Caco-2 (cell line): ENCODE measurements at regions of chr19 and their contacts with region 1.

Region 1: DNA sequence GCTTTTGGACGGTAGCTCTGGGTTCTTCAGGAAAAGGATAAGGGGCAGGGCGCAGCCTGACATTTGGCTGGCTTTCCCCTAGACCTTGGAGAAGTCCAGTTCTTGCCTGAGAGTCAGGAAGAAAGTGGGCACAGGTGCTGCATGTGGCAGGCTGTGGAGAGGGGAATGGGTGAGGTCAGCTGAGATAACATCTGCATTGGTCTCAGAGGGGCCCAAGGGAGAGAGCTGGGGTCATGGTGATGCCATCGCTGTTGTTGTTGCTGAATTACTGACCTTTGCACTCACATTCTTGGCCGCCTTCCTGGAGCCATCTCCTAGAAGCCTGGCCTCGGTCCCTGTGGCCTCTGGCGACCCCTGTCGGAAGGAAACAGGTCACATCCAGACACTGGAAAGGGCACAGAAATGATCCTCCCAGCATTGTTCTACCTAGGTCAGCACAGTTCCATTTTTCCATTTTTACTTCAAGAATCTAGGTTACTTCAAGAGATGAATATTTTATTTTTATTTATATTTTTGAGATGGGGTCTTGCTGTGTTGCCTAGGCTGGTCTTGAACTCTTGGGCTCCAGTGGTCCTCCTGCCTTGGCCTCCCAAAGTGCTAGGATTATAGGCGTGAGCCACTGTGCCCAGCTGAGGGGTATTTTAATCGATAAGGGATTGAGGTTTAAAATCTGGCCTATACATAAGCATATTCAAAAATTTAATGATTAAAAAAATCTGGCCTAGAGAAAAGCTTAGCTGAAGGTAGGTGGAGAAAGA is 6.5 kb upstream of the LIPE start:
- DNase-seq: peak; percentile 92 to 94
- H3K4me3 ChIP-seq: no peak overlapping the region
- H3K4me3 Mint-ChIP-seq: peak overlapping the region; percentile 51
- H3K27ac Mint-ChIP-seq: peak overlapping the region; percentile 94
- H3K4me1 ChIP-seq: peaks cover 15% of the 10 kb centered on the region
- H3K4me1 Mint-ChIP-seq: peaks cover 22% of the 10 kb centered on the region
- H3K27me3 ChIP-seq: no peaks in the 10 kb centered on the region
- H3K27me3 Mint-ChIP-seq: no peaks in the 10 kb centered on the region
- CTCF ChIP-seq: peak; percentile 82 to 91

Region 2: DNA sequence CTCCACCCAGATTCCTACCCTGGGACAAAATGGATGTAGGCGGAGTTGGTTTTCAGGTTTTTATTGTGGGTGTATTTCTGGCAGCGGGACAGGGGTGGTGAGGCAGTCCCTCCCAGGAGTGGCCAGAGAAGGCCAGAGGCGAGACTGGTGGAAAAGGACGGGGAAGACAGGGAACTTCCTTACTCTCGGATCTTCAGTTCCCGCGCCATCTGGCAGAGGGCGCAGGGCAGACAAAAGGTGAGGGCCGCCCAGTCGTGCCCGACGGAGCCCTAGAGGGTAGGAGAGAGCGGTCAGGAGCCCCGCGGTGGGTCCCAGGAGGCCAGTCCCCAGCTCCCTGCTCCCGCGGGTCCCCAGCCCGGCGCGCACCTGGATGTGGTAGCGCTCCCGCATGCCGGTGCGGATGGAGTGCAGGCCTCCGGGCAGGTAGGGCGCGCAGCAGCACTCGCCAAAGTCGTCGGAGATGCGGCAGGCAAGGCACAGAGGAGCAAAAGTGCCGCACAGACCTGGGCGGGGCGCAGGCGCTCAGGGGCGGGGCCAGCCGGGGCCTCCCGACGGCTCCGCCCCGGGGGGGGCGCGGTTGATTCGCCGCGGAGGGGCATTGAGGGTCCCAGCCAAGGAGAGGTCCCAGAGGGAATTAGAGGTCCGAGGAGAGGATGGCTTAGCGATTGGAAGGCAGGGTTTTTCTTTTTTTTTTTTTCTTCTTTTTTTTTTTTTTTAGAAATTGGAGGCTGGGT is 46.5 kb before region 1 on chr19:
- CTCF ChIA-PET with region 1: interaction called, 6 read pairs
- POLR2A ChIA-PET with region 1: no interaction called
- intact Hi-C with region 1: loop called (anchors 1 kb)
- DNase-seq: peak; percentile 88 to 92
- H3K4me3 ChIP-seq: peak overlapping the region; percentile 45
- H3K4me3 Mint-ChIP-seq: peak overlapping the region; percentile 82
- H3K27ac Mint-ChIP-seq: peak overlapping the region; percentile 83
- H3K4me1 ChIP-seq: 0 out of 2 replicates have a peak, but pooled peaks cover 3% of the 10 kb centered on the region
- H3K4me1 Mint-ChIP-seq: peaks cover 19% of the 10 kb centered on the region
- H3K27me3 ChIP-seq: peaks cover 2% of the 10 kb centered on the region; the same call in 1 of the 2 replicates
- H3K27me3 Mint-ChIP-seq: peaks cover 19% of the 10 kb centered on the region
- CTCF ChIP-seq: peak; percentile 83 to 85